Esophagus muscularis mucosa (tissue), 4 donors: ENCODE measurements at regions of chr4 and their contacts with region 1.

Region 1: DNA sequence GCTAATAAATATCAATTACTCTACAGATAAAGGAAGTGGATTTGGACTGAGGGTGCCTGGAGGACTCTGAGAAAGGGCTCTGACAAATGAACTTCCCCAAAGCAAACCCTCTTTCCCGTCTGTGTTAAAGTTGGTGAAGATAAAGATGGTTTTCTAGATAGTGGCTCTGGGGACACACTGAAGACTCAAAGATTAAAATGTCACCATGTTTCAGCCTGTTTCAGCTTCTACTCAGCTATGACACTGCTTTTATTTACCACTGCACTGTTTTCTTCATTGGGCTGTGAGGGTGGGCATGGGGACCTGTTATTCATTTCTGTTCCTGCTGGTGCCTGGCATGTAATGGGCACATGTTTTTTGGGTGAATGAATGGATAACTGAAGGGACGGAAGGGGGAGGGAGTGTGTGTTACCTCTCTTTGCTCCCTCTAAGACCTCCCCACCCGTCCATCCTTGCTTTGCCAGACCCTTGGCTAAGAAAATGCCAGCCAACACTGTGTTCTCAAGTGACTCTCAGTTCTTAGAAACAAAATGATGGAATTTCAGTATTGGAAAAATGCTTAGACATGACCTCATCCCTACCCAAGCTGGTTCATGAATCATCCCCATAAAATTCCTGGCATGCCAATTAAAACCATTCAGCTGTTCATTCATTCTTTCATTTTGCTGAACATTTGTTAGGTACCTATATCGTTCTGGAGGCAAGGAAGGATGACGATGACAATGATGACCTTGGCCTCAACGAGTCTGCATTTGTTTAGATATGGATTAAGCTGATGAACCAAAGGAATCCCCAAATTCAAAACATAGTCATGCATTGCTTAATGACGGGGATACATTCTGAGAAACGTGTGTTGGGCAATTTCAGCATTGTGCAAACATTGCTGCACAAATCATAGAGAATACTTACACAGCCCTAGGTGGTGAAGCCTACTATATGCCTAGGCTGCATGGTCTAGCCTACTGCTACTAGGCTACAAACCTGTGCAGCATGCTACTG is 13.4 kb upstream of the STK32B start:
- DNase-seq: no peak
- H3K4me3 ChIP-seq: no peak overlapping the region
- H3K27ac ChIP-seq: peak overlapping the region in 1 of 4 donors; percentile 17
- H3K4me1 ChIP-seq: peaks cover 21 to 46% (median 40%) of the 10 kb centered on the region in 4 donors
- H3K27me3 ChIP-seq: peaks cover 0 to 3% (median 0%) of the 10 kb centered on the region in 4 donors
- CTCF ChIP-seq: no peak
- EP300 ChIP-seq: no peak
- POLR2A ChIP-seq: no peak

Region 2: GRCh38 chr4:4995103-4995907 is 42.5 kb before region 1 on chr4:
- intact Hi-C with region 1: loop called (anchors 5 kb)
- DNase-seq: peak; percentile 92
- H3K4me3 ChIP-seq: no peak overlapping the region
- H3K27ac ChIP-seq: no peak overlapping the region
- H3K4me1 ChIP-seq: peaks cover 17 to 40% (median 35%) of the 10 kb centered on the region in 4 donors
- H3K27me3 ChIP-seq: no peaks in the 10 kb centered on the region
- CTCF ChIP-seq: peak; percentile 83 to 98 (median 85)
- EP300 ChIP-seq: no peak
- POLR2A ChIP-seq: no peak